GM13977 (cell line): ENCODE measurements at regions of chr5 and their contacts with region 1.

Region 1: DNA sequence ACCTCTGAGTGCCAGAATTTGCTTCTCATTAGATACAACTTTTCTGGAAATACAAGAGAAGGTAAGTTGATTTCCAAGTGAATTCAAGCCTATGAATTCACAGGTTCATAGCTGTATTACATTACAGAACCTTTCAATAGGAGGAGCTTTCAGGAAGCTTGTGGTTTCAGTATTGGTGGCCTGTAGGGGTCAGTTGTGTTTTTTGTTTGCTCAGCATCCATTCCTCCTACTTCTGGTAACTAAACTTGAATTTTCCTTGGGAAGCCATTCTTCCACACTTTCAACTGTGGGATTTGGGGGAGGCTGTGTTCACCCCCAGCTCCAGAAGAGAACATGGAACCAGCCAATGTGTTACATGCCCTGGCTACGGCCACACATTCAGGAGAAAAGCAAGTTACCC is 5.6 kb upstream of the CYSTM1 start:
- DNase-seq: no peak
- CTCF ChIP-seq: peak; percentile 18

Region 2: GRCh38 chr5:139696894-139697658 is 472.3 kb before region 1 on chr5:
- in situ Hi-C with region 1: no loop called
- DNase-seq: peak; percentile 64
- CTCF ChIP-seq: no peak

Region 3: GRCh38 chr5:140060816-140061215 is 108.6 kb before region 1 on chr5:
- in situ Hi-C with region 1: loop called (anchors 10 kb)
- DNase-seq: no peak
- CTCF ChIP-seq: no peak